Calu3 (cell line): ENCODE measurements at regions of chr3 and their contacts with region 1.

Region 1: GRCh38 chr3:127574880-127575878 is 15.4 kb downstream of the TPRA1 start:
- DNase-seq: peak; percentile 93
- H3K4me3 Mint-ChIP-seq: no peak overlapping the region
- H3K27ac Mint-ChIP-seq: no peak overlapping the region
- H3K4me1 Mint-ChIP-seq: peaks cover 19% of the 10 kb centered on the region
- H3K27me3 Mint-ChIP-seq: no peaks in the 10 kb centered on the region
- CTCF ChIP-seq: peak; percentile 100

Region 2: GRCh38 chr3:127328421-127328820 is 246.8 kb before region 1 on chr3:
- CTCF ChIA-PET with region 1: no interaction called
- intact Hi-C with region 1: no loop called
- DNase-seq: no peak
- H3K4me3 Mint-ChIP-seq: no peak overlapping the region
- H3K27ac Mint-ChIP-seq: no peak overlapping the region
- H3K4me1 Mint-ChIP-seq: no peaks in the 10 kb centered on the region
- H3K27me3 Mint-ChIP-seq: peaks cover 96% of the 10 kb centered on the region
- CTCF ChIP-seq: no peak

Region 3: DNA sequence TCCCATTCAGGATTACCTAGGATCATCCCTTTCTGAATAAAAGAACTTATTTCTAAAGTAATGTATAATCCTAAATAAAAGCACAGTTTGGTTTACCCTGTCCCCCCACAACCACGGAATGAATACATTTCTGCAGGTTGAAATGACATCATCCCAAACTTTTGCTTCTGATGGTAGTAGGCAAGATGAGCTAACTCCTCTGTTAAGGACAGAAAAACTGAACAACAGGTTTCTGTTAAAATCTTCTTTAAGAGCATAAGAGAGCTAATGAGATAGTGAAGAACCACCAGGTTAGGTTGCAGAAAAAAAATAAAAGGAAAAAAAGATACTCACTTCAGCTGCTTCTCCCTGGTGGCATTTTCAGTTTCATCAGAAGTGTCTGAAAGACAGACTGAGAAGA is 75.8 kb before region 1 on chr3:
- CTCF ChIA-PET with region 1: no interaction called
- intact Hi-C with region 1: no loop called
- DNase-seq: no peak
- H3K4me3 Mint-ChIP-seq: no peak overlapping the region
- H3K27ac Mint-ChIP-seq: no peak overlapping the region
- H3K4me1 Mint-ChIP-seq: no peaks in the 10 kb centered on the region
- H3K27me3 Mint-ChIP-seq: peaks cover 65% of the 10 kb centered on the region
- CTCF ChIP-seq: no peak

Region 4: GRCh38 chr3:127585493-127586413 is 10.6 kb after region 1 on chr3:
- CTCF ChIA-PET with region 1: interaction called, 15 read pairs
- intact Hi-C with region 1: no loop called
- DNase-seq: no peak
- H3K4me3 Mint-ChIP-seq: no peak overlapping the region
- H3K27ac Mint-ChIP-seq: no peak overlapping the region
- H3K4me1 Mint-ChIP-seq: peaks cover 34% of the 10 kb centered on the region
- H3K27me3 Mint-ChIP-seq: no peaks in the 10 kb centered on the region
- CTCF ChIP-seq: no peak

Region 5: GRCh38 chr3:127598841-127599570 is 23.8 kb after region 1 on chr3:
- CTCF ChIA-PET with region 1: interaction called, 11 read pairs
- intact Hi-C with region 1: no loop called
- DNase-seq: peak; percentile 24
- H3K4me3 Mint-ChIP-seq: peak overlapping the region; percentile 78
- H3K27ac Mint-ChIP-seq: peak overlapping the region; percentile 85
- H3K4me1 Mint-ChIP-seq: peaks cover 28% of the 10 kb centered on the region
- H3K27me3 Mint-ChIP-seq: no peaks in the 10 kb centered on the region
- CTCF ChIP-seq: no peak

Region 6: DNA sequence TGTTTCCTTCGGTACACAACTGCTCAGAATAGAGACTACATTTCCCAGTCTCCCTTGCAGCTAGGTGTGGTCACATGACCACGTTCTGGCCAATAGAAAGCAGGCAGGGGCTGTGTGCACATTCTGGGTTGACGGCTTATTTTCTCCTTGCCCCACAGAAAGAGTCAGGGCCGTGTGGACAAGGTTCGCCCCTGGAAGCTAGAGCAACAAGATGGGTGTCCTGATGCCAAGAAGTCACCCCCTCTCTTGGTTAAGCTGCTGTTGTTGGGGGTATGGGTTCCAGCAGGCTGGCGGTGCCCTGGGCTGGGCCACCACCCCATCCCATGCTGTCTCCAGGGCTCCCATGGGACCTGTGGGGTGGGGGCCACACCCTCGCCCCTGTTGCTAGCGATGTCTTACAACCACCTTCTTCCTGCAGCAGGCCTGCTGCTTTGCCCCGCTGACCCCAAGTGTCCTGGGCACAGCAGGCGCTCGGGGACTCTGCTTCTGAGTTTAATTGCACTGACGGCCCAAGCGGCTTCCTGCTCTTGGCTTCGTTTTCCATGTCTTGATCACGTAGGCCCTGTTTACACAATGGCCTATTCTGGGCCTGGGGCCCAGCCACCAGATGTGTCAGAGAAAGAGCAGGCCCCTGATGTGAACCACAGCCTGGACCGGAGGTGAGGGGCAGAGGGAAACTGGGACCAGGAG is 122.5 kb after region 1 on chr3:
- CTCF ChIA-PET with region 1: interaction called, 18 read pairs
- intact Hi-C with region 1: loop called (anchors 5 kb)
- DNase-seq: peak; percentile 73
- H3K4me3 Mint-ChIP-seq: no peak overlapping the region
- H3K27ac Mint-ChIP-seq: peak overlapping the region; percentile 19
- H3K4me1 Mint-ChIP-seq: no peaks in the 10 kb centered on the region
- H3K27me3 Mint-ChIP-seq: no peaks in the 10 kb centered on the region
- CTCF ChIP-seq: no peak

Region 7: DNA sequence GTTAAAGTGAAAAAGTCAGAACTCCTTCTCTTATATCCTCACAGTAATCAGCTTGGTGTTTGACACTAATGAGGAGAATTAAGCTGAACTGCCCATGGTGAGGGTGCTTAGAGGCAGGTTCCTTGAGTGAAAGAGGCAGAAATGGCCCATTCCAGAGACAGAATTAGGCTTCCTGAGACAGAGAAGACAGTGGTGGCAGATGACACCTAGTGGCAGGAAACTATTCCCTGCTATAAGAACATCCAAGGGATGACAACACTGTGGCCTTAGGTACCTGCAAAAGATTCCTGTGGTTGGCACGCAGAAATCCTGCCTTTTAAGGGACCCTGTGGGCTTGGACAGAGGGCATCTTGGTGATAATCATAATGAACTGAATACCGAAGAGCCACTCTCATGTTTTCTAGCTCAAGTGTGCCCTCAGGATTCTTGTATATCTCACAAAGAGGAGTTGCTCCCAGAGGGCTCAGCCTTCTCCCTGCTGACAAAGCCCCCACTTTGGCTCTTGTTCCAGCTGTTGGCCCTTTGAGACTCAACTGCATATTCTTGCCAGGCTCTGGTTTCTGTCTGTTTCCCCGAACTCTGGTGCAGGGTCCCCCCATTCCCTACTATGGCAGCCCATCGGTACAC is 395.9 kb after region 1 on chr3:
- CTCF ChIA-PET with region 1: no interaction called
- intact Hi-C with region 1: loop called (anchors 1 kb)
- DNase-seq: peak; percentile 54
- H3K4me3 Mint-ChIP-seq: no peak overlapping the region
- H3K27ac Mint-ChIP-seq: no peak overlapping the region
- H3K4me1 Mint-ChIP-seq: no peaks in the 10 kb centered on the region
- H3K27me3 Mint-ChIP-seq: peaks cover 92% of the 10 kb centered on the region
- CTCF ChIP-seq: peak; percentile 88